Heart right ventricle (tissue), 16 donors: ENCODE measurements at regions of chr17 and their contacts with region 1.

Region 1: DNA sequence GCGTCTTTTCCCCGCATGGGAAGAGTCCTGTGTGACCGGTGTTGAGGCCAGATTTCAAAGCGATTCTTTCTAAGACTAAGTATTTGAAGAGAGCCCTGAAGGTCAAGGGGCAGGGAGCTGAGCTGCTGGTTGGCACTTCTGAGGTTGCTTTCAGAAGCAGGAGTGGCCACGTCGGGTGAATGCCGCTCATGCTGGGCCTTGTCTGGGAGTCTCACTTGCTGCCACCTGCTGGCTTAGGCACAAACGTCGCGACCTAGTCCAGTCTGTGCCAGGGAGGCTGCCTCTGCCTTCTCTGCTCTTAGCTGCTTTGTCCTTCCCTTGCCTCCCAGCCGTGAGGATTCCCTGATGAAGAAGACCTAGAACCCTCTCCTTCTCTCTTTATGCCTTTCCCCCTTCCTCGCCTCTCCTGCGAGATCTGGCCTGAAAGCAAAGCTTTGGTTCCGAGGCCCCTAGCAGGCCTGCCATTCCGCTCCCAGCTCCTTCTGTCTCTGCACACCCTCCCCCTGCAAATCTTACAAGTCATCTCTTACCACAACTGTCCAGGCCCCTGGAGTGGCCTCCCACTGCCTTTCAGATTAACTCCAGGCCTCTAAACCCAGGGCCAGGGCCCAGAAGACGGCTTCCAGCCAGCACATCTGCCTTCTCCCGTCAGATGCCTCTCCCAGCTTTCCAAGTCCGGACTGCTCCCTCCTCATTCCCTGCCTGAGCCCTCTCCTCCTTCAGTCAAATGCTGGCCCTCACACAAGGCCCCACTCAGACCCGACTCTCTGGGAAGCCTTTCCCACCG is 11.4 kb downstream of the CTNS start:
- DNase-seq: peak; percentile 52 to 53
- ATAC-seq: peak; percentile 68 to 83 (median 80)
- H3K4me3 ChIP-seq: no peak overlapping the region
- H3K27ac ChIP-seq: no peak overlapping the region
- H3K4me1 ChIP-seq: no peaks in the 10 kb centered on the region
- H3K27me3 ChIP-seq: no peaks in the 10 kb centered on the region
- CTCF ChIP-seq: peak in 8 of 9 donors; percentile 12 to 61 (median 52)

Region 2: GRCh38 chr17:3048767-3049471 is 599.0 kb before region 1 on chr17:
- intact Hi-C with region 1: loop called in 3 of 10 experiments (anchors 10 kb)
- DNase-seq: peak; percentile 96 to 98
- ATAC-seq: peak; percentile 99 to 100 (median 100)
- H3K4me3 ChIP-seq: peak overlapping the region; percentile 48 to 85 (median 72)
- H3K27ac ChIP-seq: peak overlapping the region in 9 of 10 donors; percentile 66 to 91 (median 72)
- H3K4me1 ChIP-seq: peaks cover 0 to 16% (median 0%) of the 10 kb centered on the region in 9 donors
- H3K27me3 ChIP-seq: no peaks in the 10 kb centered on the region
- CTCF ChIP-seq: peak; percentile 62 to 95 (median 88)

Region 3: GRCh38 chr17:3688027-3688553 is 40.1 kb after region 1 on chr17:
- intact Hi-C with region 1: no loop called
- DNase-seq: no peak
- ATAC-seq: no peak
- H3K4me3 ChIP-seq: no peak overlapping the region
- H3K27ac ChIP-seq: no peak overlapping the region
- H3K4me1 ChIP-seq: peaks cover 0 to 3% (median 0%) of the 10 kb centered on the region in 9 donors
- H3K27me3 ChIP-seq: peaks cover 0 to 39% (median 23%) of the 10 kb centered on the region in 7 donors
- CTCF ChIP-seq: no peak